Activated CD8-positive, alpha-beta T cell treated with anti-CD3 and anti-CD28 coated beads for 36 hours (primary cell): ENCODE measurements at regions of chr2 and their contacts with region 1.

Region 1: DNA sequence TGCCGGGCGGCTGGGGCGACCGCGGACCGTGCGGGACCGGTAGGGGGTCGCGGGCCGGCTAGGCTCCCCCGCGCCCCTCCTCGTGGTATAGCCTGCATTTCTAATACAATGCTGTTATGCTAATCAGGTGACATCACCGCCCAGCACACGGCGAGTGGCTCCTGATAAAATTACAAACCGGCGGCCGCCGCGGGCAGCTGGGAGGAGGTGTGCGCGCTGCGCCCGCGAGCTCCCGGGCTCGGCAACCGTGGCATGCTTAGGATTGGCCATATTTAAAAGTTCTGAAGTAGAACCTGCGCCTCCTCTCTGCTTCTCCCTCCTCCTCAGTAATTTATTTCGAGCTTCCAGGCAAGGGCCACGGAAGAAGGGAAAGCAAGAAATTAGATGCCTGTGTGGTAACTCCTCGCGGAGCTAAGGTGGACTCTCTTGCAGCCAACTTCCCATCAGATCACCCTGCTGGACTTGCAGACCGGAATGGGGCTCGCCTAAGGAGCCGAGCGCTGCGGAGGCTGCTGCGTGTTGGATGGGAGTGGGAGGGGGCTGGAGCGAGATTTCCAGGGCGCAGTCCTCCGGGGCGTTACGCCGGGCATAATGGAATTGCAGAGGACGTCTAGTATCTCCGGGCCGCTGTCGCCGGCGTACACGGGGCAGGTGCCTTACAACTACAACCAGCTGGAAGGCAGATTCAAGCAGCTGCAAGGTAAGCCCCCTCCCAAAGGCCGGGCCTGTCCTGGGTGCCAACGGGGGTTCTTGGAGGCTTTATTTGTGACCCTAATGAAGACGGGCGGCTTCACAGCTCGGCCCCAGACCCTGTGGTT is 102.3 kb downstream of the SPTBN1 start:
- DNase-seq: peak; percentile 84
- ATAC-seq: peak; percentile 57
- H3K4me3 Mint-ChIP-seq: peak overlapping the region; percentile 86
- H3K27ac Mint-ChIP-seq: peak overlapping the region; percentile 95
- H3K4me1 Mint-ChIP-seq: peaks cover 50% of the 10 kb centered on the region
- H3K27me3 Mint-ChIP-seq: no peaks in the 10 kb centered on the region
- CTCF ChIP-seq: no peak

Region 2: GRCh38 chr2:54570925-54571694 is 12.7 kb after region 1 on chr2:
- CTCF ChIA-PET with region 1: interaction called, 24 read pairs
- POLR2A ChIA-PET with region 1: interaction called, 100 read pairs
- intact Hi-C with region 1: loop called (anchors 2 kb)
- DNase-seq: peak; percentile 89
- ATAC-seq: peak; percentile 37
- H3K4me3 Mint-ChIP-seq: peak overlapping the region; percentile 43
- H3K27ac Mint-ChIP-seq: peak overlapping the region; percentile 96
- H3K4me1 Mint-ChIP-seq: peaks cover 86% of the 10 kb centered on the region
- H3K27me3 Mint-ChIP-seq: no peaks in the 10 kb centered on the region
- CTCF ChIP-seq: no peak

Region 3: GRCh38 chr2:54589340-54590215 is 31.2 kb after region 1 on chr2:
- CTCF ChIA-PET with region 1: interaction called, 13 read pairs
- POLR2A ChIA-PET with region 1: interaction called, 43 read pairs
- intact Hi-C with region 1: loop called (anchors 5 kb)
- DNase-seq: peak; percentile 71
- ATAC-seq: peak; percentile 62
- H3K4me3 Mint-ChIP-seq: peak overlapping the region; percentile 56
- H3K27ac Mint-ChIP-seq: peak overlapping the region; percentile 96
- H3K4me1 Mint-ChIP-seq: peaks cover 87% of the 10 kb centered on the region
- H3K27me3 Mint-ChIP-seq: no peaks in the 10 kb centered on the region
- CTCF ChIP-seq: no peak

Region 4: GRCh38 chr2:54606393-54606969 is 48.1 kb after region 1 on chr2:
- CTCF ChIA-PET with region 1: interaction called, 12 read pairs
- POLR2A ChIA-PET with region 1: interaction called, 44 read pairs
- intact Hi-C with region 1: no loop called
- DNase-seq: peak; percentile 66
- ATAC-seq: peak; percentile 72
- H3K4me3 Mint-ChIP-seq: peak overlapping the region; percentile 42
- H3K27ac Mint-ChIP-seq: peak overlapping the region; percentile 87
- H3K4me1 Mint-ChIP-seq: peaks cover 83% of the 10 kb centered on the region
- H3K27me3 Mint-ChIP-seq: no peaks in the 10 kb centered on the region
- CTCF ChIP-seq: no peak

Region 5: GRCh38 chr2:54665436-54665856 is 107.0 kb after region 1 on chr2:
- CTCF ChIA-PET with region 1: interaction called, 22 read pairs
- POLR2A ChIA-PET with region 1: interaction called, 4 read pairs
- intact Hi-C with region 1: no loop called
- DNase-seq: peak; percentile 75
- ATAC-seq: peak; percentile 89
- H3K4me3 Mint-ChIP-seq: no peak overlapping the region
- H3K27ac Mint-ChIP-seq: peak overlapping the region; percentile 82
- H3K4me1 Mint-ChIP-seq: peaks cover 8% of the 10 kb centered on the region
- H3K27me3 Mint-ChIP-seq: no peaks in the 10 kb centered on the region
- CTCF ChIP-seq: peak; percentile 72